A673 (cell line): ENCODE measurements at regions of chr2 and their contacts with region 1.

Region 1: DNA sequence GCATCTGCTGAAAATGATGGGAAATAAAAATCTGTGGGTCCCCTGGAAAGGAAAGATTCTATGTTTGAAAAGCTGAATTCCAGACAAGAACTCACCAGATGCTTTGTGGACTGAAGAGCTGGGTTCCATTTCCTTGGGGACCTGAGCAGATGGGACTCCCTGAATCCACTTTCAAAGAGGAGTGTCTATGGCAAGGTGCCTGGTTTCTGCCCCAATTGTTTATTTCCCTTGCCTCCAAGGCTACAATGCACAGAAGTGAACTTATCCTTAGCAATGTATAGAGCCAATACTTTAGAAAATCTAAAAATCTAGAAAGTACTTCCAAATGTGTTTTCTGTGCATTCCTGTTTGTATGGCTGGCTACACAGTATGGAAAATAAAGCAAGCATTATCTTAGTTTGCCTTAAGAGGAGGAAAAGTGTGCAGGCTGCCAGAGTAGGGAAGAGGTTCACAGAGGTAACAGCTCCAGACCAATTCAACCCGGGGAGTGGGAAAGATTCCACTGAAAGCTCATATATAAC is 420.5 kb downstream of the NRXN1 start:
- DNase-seq: no peak
- H3K4me3 ChIP-seq: no peak overlapping the region
- H3K27ac ChIP-seq: no peak overlapping the region
- H3K4me1 ChIP-seq: no peaks in the 10 kb centered on the region
- H3K27me3 ChIP-seq: peaks cover 10% of the 10 kb centered on the region
- CTCF ChIP-seq: no peak

Region 2: GRCh38 chr2:50674876-50675275 is 63.5 kb after region 1 on chr2:
- CTCF ChIA-PET with region 1: no interaction called
- POLR2A ChIA-PET with region 1: no interaction called
- intact Hi-C with region 1: loop called (anchors 5 kb)
- DNase-seq: peak; percentile 1
- H3K4me3 ChIP-seq: no peak overlapping the region
- H3K27ac ChIP-seq: no peak overlapping the region
- H3K4me1 ChIP-seq: no peaks in the 10 kb centered on the region
- H3K27me3 ChIP-seq: peaks cover 5% of the 10 kb centered on the region
- CTCF ChIP-seq: peak; percentile 27